Calu3 (cell line): ENCODE measurements at regions of chr6 and their contacts with region 1.

Region 1: DNA sequence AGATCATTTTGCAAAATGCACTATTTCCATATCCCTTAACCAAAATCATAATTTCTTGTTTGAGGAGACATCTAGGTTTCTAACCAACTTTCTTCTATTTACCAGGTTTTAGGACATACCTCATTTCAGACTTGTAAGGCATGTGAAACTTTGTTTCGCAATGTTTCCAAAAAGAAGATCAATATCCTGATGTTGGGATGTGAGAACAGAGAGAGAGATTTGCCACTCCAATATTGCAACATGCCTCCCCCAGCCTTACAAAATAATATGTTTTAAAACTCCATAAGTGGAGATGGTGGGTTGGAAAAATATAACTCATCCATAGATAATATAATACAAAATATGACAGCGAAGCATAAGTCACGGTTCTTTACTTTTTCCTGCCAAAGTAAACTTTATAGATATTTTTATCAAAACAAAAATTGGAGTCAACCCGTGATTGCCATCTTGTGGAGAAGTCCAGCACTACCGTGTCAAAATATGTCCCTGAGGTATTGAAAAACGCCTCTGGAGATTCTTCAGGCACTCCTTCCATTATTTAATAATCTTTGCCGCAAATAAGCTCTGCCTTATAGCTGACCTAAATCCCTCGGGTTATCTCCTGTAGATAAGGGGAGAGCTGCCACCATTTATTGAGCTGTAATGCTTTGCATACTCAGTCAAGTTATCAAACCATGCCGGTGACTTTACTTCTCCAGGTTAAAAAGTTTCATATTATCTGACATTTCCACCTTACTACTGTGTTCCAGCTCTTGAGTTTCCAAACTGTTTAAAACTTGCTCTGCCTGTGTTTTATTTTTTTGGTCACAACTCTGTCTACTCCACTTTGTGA is 534.2 kb downstream of the HACE1 start:
- DNase-seq: peak; percentile 14
- H3K4me3 Mint-ChIP-seq: no peak overlapping the region
- H3K27ac Mint-ChIP-seq: no peak overlapping the region
- H3K4me1 Mint-ChIP-seq: no peaks in the 10 kb centered on the region
- H3K27me3 Mint-ChIP-seq: no peaks in the 10 kb centered on the region
- CTCF ChIP-seq: peak; percentile 47

Region 2: GRCh38 chr6:103797738-103798137 is 527.8 kb before region 1 on chr6:
- CTCF ChIA-PET with region 1: no interaction called
- intact Hi-C with region 1: loop called (anchors 10 kb)
- DNase-seq: no peak
- H3K4me3 Mint-ChIP-seq: no peak overlapping the region
- H3K27ac Mint-ChIP-seq: no peak overlapping the region
- H3K4me1 Mint-ChIP-seq: no peaks in the 10 kb centered on the region
- H3K27me3 Mint-ChIP-seq: no peaks in the 10 kb centered on the region
- CTCF ChIP-seq: peak; percentile 32

Region 3: DNA sequence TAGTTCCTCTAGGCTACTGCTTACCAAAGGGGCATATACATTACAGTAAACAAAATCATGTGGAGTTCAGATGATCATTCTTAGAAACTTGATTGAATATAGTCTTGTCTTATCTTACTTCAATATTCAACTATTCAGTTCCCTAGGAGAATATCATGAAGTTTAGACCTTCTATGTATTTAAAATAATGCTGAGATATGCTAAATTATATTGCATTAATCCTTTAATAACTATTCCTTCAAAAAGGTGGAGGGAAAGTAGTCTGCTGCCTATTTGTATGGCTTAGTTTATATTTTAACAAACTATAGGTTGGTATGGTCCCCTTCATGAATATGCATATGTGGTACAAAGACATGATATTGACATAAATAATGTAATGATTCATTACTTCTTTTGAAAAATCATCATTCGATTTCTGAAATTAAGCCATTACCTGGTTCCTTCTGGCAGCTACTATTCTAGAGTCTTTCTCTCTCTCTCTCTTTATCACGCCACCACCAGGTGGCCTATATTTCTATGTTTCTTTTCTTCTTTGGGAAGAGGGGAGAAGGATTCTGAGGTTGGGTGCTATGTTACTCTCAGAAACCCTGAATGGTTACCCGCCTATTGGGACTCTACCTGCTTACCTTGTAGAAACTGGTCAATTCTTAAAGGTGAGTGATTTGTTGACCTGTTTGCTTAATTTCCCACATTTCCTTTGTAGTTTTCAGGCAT is 321.6 kb before region 1 on chr6:
- CTCF ChIA-PET with region 1: no interaction called
- intact Hi-C with region 1: loop called (anchors 5 kb)
- DNase-seq: no peak
- H3K4me3 Mint-ChIP-seq: no peak overlapping the region
- H3K27ac Mint-ChIP-seq: no peak overlapping the region
- H3K4me1 Mint-ChIP-seq: no peaks in the 10 kb centered on the region
- H3K27me3 Mint-ChIP-seq: no peaks in the 10 kb centered on the region
- CTCF ChIP-seq: no peak

Region 4: GRCh38 chr6:104525677-104526312 is 200.2 kb after region 1 on chr6:
- CTCF ChIA-PET with region 1: interaction called, 4 read pairs
- intact Hi-C with region 1: loop called (anchors 5 kb)
- DNase-seq: peak; percentile 76
- H3K4me3 Mint-ChIP-seq: peak overlapping the region; percentile 66
- H3K27ac Mint-ChIP-seq: peak overlapping the region; percentile 24
- H3K4me1 Mint-ChIP-seq: peaks cover 26% of the 10 kb centered on the region
- H3K27me3 Mint-ChIP-seq: no peaks in the 10 kb centered on the region
- CTCF ChIP-seq: peak; percentile 73

Region 5: DNA sequence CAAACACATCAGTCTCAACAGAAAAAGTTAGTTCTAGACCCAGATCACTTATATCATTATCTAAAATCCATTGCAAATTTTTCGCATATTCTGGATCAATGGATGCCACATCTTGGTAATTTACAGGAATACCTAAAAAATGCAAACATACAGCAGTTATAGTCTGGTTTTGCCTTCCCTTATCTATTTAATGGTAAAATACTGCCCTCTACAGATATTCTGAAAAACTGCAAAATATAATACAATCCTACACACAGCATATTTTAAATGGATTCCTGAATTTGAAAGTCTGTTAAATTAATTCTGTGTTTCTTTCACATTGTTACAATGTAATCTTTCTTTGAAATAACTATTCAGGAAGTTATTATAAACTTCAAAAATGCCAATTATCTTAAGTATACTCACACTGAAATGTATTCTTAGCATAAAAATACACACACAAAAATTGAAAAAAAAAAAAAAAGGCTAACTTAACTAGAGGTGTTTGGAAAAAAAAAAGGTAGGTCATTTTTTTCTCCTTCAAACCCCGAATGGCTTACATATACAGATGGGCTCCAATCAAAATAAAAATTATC is 445.8 kb after region 1 on chr6:
- CTCF ChIA-PET with region 1: no interaction called
- intact Hi-C with region 1: loop called (anchors 1 kb)
- DNase-seq: no peak
- H3K4me3 Mint-ChIP-seq: no peak overlapping the region
- H3K27ac Mint-ChIP-seq: no peak overlapping the region
- H3K4me1 Mint-ChIP-seq: no peaks in the 10 kb centered on the region
- H3K27me3 Mint-ChIP-seq: no peaks in the 10 kb centered on the region
- CTCF ChIP-seq: peak; percentile 24